ENCODE measurements at regions of chr6 and their contacts with region 1.

Region 1: GRCh38 chr6:159174263-159174969 is 5.2 kb downstream of the FNDC1 start:
- DNase-seq: peak; percentile 40 to 80 (median 56)
- ATAC-seq: peak; percentile 79
- H3K4me3 ChIP-seq: no peak overlapping the region
- H3K4me3 Mint-ChIP-seq: no peak overlapping the region
- H3K27ac ChIP-seq: no peak overlapping the region
- H3K27ac Mint-ChIP-seq: no peak overlapping the region
- H3K4me1 ChIP-seq: peaks cover 15% of the 10 kb centered on the region
- H3K4me1 Mint-ChIP-seq: peaks cover 12% of the 10 kb centered on the region
- H3K27me3 ChIP-seq: peaks cover 27 to 53% of the 10 kb centered on the region in 2 experiments
- H3K27me3 Mint-ChIP-seq: peaks cover 67% of the 10 kb centered on the region
- CTCF ChIP-seq: peak; percentile 81

Region 2: DNA sequence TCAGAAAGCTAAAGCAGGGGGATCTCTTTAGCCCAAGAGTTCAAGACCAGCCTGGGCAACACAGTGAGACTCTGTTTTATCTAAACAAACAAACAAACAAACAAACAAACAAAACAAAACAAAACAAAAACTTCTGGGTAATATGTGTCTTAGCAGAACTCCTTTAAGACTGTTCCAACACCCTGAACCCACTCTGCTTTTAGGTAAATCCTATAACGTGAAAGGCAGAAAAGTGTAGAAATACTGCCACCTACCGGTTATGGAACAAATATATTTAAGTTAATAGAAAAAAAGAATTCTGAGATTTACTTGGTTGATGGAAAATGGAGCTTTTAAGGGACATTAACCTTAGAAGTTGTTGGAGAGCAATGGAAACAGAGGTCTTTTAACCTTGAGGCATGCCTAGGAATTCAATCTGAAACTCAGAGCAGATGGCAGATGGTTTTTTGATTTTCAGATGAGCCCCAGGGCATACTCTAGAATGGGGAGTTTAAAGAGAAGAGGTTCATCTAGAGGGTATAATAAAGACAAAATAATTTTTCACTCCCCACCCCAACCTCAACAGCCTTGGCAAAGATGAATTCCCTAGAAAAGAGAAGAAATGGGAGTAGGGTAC is 480.2 kb after region 1 on chr6:
- CTCF ChIA-PET with region 1: interaction called, 9 read pairs
- POLR2A ChIA-PET with region 1: interaction called, 5 read pairs
- intact Hi-C with region 1: loop called in 1 of 2 experiments (anchors 1 kb)
- DNase-seq: peak in 3 of 14 experiments; percentile 59 to 69 (median 65)
- ATAC-seq: no peak
- H3K4me3 ChIP-seq: no peak overlapping the region
- H3K4me3 Mint-ChIP-seq: no peak overlapping the region
- H3K27ac ChIP-seq: no peak overlapping the region
- H3K27ac Mint-ChIP-seq: no peak overlapping the region
- H3K4me1 ChIP-seq: no peaks in the 10 kb centered on the region
- H3K4me1 Mint-ChIP-seq: no peaks in the 10 kb centered on the region
- H3K27me3 ChIP-seq: no peaks in the 10 kb centered on the region
- H3K27me3 Mint-ChIP-seq: no peaks in the 10 kb centered on the region
- CTCF ChIP-seq: peak; percentile 79

Region 3: DNA sequence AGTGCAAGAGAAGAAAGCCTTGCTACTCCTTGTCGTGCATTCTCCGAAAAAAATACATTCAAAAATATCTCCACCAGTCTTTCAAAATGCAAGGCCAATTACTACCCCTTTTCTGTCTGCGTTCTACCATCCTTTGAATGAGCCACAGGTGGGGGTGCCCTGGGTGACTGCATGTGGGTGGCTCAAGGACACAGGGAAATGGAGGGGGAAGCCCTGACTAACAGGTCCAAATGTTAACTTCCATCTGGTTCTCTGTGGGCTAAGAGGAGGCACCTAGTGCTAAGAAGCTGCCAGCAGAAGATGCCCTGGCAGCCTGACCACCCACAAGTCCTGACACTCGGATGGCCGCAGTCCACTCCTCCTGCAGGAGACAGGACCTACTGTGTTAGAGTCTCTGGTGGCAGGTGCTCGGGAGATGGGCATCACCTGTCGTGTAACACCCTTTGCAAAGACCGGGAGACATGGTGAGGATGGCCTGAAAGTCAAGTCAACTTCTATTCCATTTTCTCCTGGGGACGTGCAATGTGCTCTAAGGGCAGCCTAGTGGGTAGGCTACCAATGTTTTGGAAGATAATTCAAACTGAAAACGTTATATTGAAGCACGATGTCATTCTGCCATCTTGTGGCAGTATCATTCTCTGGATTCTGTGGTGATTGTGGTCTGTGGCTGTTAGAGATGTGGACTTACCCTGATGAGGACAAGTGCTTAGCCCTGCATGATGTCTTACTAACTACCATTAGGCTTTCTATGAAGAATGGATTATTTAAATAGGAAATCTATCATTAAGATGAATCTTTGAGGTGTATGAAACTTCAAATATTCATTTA is 767.1 kb after region 1 on chr6:
- CTCF ChIA-PET with region 1: no interaction called
- POLR2A ChIA-PET with region 1: no interaction called
- intact Hi-C with region 1: loop called (anchors 2 kb)
- DNase-seq: peak in 8 of 14 experiments; percentile 5 to 80 (median 22)
- ATAC-seq: peak; percentile 82
- H3K4me3 ChIP-seq: no peak overlapping the region
- H3K4me3 Mint-ChIP-seq: no peak overlapping the region
- H3K27ac ChIP-seq: no peak overlapping the region
- H3K27ac Mint-ChIP-seq: no peak overlapping the region
- H3K4me1 ChIP-seq: peaks cover 4% of the 10 kb centered on the region
- H3K4me1 Mint-ChIP-seq: peaks cover 8% of the 10 kb centered on the region
- H3K27me3 ChIP-seq: no peaks in the 10 kb centered on the region
- H3K27me3 Mint-ChIP-seq: peaks cover 5% of the 10 kb centered on the region
- CTCF ChIP-seq: peak; percentile 46

Region 4: DNA sequence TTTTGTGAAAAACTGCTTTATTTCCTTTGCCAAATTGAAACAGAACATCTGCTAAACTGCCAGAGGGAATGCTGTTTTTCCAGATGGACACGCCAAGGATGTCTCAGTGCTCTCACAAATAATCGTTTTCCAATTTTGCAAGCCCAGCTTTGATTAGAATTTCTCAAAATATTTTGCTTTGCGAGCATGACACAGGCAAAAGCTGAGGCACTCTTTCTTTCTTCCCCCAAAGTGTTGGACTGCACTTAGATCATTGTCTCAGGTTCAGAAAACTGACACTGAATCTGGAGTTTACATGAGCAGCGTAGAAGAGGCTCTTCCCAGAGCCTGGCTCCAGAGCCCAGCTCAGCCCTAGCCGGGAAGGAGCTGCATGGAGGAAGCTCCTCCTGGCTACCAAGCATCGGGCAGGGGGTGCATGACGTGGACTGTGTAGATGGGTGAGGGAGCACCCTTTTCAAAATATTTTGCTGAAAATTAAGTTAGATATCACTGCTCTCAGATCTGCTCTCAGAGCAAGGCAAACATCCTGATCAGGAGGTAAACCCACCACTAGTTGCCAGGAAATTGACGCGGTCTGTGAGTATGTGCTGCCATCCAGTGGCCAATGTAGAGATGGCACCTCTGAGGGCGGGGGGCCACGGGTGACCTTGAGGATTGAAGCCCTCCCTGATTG is 1281.3 kb after region 1 on chr6:
- CTCF ChIA-PET with region 1: no interaction called
- POLR2A ChIA-PET with region 1: no interaction called
- intact Hi-C with region 1: loop called in 1 of 2 experiments (anchors 5 kb)
- DNase-seq: peak; percentile 49 to 80 (median 62)
- ATAC-seq: peak; percentile 98
- H3K4me3 ChIP-seq: no peak overlapping the region
- H3K4me3 Mint-ChIP-seq: no peak overlapping the region
- H3K27ac ChIP-seq: no peak overlapping the region
- H3K27ac Mint-ChIP-seq: no peak overlapping the region
- H3K4me1 ChIP-seq: peaks cover 47% of the 10 kb centered on the region
- H3K4me1 Mint-ChIP-seq: peaks cover 35% of the 10 kb centered on the region
- H3K27me3 ChIP-seq: no peaks in the 10 kb centered on the region
- H3K27me3 Mint-ChIP-seq: peaks cover 29% of the 10 kb centered on the region
- CTCF ChIP-seq: peak; percentile 98

Region 5: GRCh38 chr6:160534050-160534696 is 1359.8 kb after region 1 on chr6:
- CTCF ChIA-PET with region 1: no interaction called
- POLR2A ChIA-PET with region 1: no interaction called
- intact Hi-C with region 1: loop called in 1 of 2 experiments (anchors 10 kb)
- DNase-seq: peak; percentile 32 to 75 (median 51)
- ATAC-seq: peak; percentile 64
- H3K4me3 ChIP-seq: peak overlapping the region; percentile 6
- H3K4me3 Mint-ChIP-seq: no peak overlapping the region
- H3K27ac ChIP-seq: no peak overlapping the region
- H3K27ac Mint-ChIP-seq: no peak overlapping the region
- H3K4me1 ChIP-seq: peaks cover 9% of the 10 kb centered on the region
- H3K4me1 Mint-ChIP-seq: no peaks in the 10 kb centered on the region
- H3K27me3 ChIP-seq: no peaks in the 10 kb centered on the region
- H3K27me3 Mint-ChIP-seq: peaks cover 7% of the 10 kb centered on the region
- CTCF ChIP-seq: peak; percentile 96

Measured in CD4-positive, alpha-beta T cell (primary cell).